ENCODE measurements at regions of chr1 and their contacts with region 1.

Region 1: DNA sequence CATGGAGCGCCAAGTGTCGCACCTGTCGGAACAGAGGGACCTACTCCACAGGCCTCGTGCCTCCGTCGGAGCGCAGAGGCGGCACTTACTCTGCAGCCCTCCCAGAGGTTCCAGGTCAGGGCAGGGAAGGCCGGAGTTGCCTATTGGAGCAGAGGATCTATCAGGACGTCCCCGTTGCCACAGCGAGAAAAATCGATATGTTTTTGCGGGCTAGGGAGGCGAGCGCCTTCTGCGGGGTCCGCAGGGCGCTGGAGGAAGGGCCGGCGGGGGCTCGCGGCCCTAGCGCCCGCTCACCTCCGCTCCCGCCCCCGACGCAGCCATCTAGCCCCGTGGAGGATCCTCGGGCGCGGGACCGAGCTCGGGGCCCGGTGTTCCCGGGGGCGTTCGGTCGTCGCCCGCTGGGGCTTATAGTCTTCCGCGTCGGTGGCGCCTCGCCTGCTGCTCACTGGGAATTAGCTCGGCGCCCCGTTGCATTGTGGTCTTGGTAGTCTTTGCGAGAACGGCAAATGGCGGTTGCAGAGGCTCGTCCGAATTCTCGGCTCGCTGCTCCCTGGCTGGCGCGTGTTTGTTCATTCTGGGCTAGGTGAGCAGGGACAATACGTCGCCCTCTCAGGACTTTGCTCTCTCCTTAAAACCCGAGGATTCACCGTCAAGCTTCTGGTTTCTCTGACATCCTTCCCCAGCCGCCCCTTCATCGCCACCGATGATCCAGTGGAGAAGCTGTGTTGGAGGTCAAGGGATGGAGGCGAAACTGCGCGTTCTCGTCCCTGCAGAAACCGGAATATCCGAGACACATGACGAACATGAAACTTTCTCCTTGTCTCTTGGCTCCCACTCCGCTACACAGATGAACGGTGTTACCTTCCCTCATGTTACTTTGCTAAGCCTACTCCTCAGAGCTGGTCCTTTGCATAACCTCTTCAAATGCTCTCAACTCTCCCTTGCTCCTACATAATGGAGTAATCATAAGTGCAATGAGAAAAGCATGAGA is at the start of gene JTB:
- DNase-seq: peak; percentile 65 to 89 (median 78)
- ATAC-seq: peak; percentile 98
- H3K4me3 ChIP-seq: peak within 1 kb of the TSS; percentile 94
- H3K4me3 Mint-ChIP-seq: peak within 1 kb of the TSS; percentile 92 to 99 (median 97)
- H3K27ac ChIP-seq: peak within 1 kb of the TSS; percentile 96
- H3K27ac Mint-ChIP-seq: peak within 1 kb of the TSS; percentile 84 to 98 (median 94)
- H3K4me1 ChIP-seq: peaks cover 9 to 15% of the 10 kb centered on the region in 2 donors
- H3K4me1 Mint-ChIP-seq: peaks cover 23 to 51% (median 40%) of the 10 kb centered on the region in 7 donors
- H3K27me3 ChIP-seq: no peaks in the 10 kb centered on the region
- H3K27me3 Mint-ChIP-seq: no peaks in the 10 kb centered on the region
- total RNA-seq, gene JTB: 78.4 to 134 (median 104) TPM

Region 2: DNA sequence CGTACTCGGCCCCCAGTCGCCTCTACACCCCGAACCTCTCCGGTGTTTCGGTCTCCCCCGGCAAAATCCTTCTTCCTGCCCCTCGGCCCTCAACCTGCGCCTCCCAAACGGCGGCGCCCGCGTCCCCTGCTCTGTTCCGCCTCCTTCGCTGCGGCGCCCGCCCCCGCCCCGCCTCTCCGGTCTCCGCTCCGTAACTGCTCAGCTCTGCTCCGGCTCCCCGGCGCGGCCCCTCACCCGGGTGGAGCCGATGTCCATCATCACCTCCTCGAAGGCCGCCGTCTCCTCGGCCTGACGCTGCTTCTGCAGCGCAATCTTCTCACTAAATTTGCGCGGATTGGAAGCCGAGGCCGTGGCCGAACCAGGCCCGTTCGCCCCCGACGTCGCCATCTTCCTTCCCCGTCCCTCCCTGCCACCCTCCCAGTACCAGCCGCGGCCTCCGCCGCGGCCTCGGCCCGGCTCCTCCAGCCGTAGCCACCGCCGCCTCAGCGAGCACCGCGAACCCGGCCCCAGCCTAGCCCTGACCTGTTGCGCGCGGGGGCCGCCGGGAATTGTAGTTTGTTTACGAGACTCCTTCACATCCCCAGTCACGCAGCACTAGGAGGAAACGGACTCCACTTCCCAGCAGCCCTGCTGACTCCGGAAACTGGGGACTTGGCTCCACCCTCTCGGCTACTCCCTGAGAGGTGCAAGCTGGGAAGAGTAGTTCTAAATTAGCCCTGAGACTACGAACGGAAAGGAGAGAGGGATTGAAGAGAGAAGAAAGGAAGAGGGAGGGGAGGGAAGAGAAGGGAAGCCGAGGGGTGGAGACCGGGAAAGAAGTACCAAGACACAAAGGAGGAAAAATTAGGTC is 19.2 kb before region 1 on chr1 and contains the start of gene CRTC2:
- CTCF ChIA-PET with region 1: interaction called, 5 read pairs
- POLR2A ChIA-PET with region 1: interaction called, 90 read pairs
- intact Hi-C with region 1: loop called (anchors 1 kb)
- DNase-seq: peak; percentile 86 to 99 (median 96)
- ATAC-seq: peak; percentile 94
- H3K4me3 ChIP-seq: peak within 1 kb of the TSS; percentile 74
- H3K4me3 Mint-ChIP-seq: peak within 1 kb of the TSS; percentile 91 to 100 (median 97)
- H3K27ac ChIP-seq: peak within 1 kb of the TSS; percentile 92
- H3K27ac Mint-ChIP-seq: peak within 1 kb of the TSS; percentile 89 to 98 (median 94)
- H3K4me1 ChIP-seq: peaks cover 36% of the 10 kb centered on the region in 2 donors
- H3K4me1 Mint-ChIP-seq: peaks cover 34 to 71% (median 67%) of the 10 kb centered on the region in 7 donors
- H3K27me3 ChIP-seq: no peaks in the 10 kb centered on the region
- H3K27me3 Mint-ChIP-seq: no peaks in the 10 kb centered on the region
- total RNA-seq, gene CRTC2: 86.1 to 157 (median 119) TPM

Region 3: DNA sequence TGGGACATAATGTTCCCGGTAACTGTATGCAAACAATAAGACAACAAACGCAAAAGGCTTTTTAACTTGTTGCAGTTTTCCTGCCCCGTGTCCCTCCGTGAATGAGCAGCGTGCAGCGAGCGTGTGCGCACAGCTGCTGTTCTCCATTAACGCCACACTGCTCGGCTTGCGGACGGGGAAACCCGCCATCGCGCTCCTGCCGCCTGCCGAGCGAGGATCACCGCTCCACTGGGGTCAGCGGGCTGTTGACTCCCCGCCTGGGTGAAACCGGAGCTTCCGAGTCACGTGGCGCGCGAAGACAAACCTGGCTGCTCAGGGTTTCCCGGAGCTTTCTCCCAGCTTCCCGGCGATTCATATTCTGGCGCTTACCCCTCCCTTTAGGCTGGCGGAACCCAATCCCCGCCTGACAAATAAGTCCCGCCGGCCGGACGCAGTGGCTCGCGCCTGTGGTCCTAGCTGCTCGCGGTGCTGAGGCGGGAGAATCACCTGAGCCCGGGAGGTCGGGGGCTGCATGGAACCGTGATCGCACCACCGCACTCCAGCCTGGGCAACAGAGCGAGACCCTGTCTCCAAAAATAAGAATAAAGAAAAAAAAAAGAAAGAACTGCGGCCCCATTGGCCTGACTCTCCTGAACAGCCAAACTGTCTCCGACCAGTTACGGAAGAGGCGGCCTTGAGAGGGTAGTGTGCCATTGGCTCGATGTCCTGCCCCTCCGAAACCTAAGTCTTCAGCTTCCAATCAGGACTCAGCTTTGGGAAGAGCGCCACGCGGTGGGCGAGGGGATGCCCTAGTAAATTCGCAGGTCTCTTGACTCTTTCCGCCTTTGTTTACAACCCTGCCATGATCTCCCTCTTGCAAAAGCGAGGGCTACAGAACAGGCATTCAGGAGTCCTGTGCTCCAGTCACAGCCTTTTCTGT is 10.2 kb before region 1 on chr1 and contains the start of gene CREB3L4:
- CTCF ChIA-PET with region 1: interaction called, 11 read pairs
- POLR2A ChIA-PET with region 1: interaction called, 128 read pairs
- intact Hi-C with region 1: loop called (anchors 1 kb)
- DNase-seq: peak; percentile 68 to 89 (median 84)
- ATAC-seq: peak; percentile 91
- H3K4me3 ChIP-seq: peak within 1 kb of the TSS; percentile 89
- H3K4me3 Mint-ChIP-seq: peak within 1 kb of the TSS; percentile 83 to 97 (median 92)
- H3K27ac ChIP-seq: peak within 1 kb of the TSS; percentile 79
- H3K27ac Mint-ChIP-seq: peak within 1 kb of the TSS; percentile 87 to 99 (median 94)
- H3K4me1 ChIP-seq: peaks cover 32 to 40% of the 10 kb centered on the region in 2 donors
- H3K4me1 Mint-ChIP-seq: peaks cover 27 to 72% (median 57%) of the 10 kb centered on the region in 7 donors
- H3K27me3 ChIP-seq: no peaks in the 10 kb centered on the region
- H3K27me3 Mint-ChIP-seq: no peaks in the 10 kb centered on the region
- total RNA-seq, gene CREB3L4: 4.6 to 8.4 (median 7.0) TPM

Region 4: GRCh38 chr1:154220071-154220969 is 242.8 kb after region 1 on chr1 and contains the start of gene UBAP2L:
- CTCF ChIA-PET with region 1: no interaction called
- POLR2A ChIA-PET with region 1: no interaction called
- intact Hi-C with region 1: no loop called
- DNase-seq: peak; percentile 92 to 99 (median 99)
- ATAC-seq: peak; percentile 91
- H3K4me3 ChIP-seq: peak within 1 kb of the TSS; percentile 95
- H3K4me3 Mint-ChIP-seq: peak within 1 kb of the TSS; percentile 83 to 100 (median 98)
- H3K27ac ChIP-seq: peak within 1 kb of the TSS; percentile 99
- H3K27ac Mint-ChIP-seq: peak within 1 kb of the TSS; percentile 96 to 100 (median 99)
- H3K4me1 ChIP-seq: peaks cover 42 to 45% of the 10 kb centered on the region in 2 donors
- H3K4me1 Mint-ChIP-seq: peaks cover 46 to 76% (median 64%) of the 10 kb centered on the region in 7 donors
- H3K27me3 ChIP-seq: no peaks in the 10 kb centered on the region
- H3K27me3 Mint-ChIP-seq: peaks cover 0 to 4% (median 0%) of the 10 kb centered on the region in 5 donors
- total RNA-seq, gene UBAP2L: 183 to 235 (median 189) TPM